A673 (cell line): ENCODE measurements at regions of chr2 and their contacts with region 1.

Region 1: DNA sequence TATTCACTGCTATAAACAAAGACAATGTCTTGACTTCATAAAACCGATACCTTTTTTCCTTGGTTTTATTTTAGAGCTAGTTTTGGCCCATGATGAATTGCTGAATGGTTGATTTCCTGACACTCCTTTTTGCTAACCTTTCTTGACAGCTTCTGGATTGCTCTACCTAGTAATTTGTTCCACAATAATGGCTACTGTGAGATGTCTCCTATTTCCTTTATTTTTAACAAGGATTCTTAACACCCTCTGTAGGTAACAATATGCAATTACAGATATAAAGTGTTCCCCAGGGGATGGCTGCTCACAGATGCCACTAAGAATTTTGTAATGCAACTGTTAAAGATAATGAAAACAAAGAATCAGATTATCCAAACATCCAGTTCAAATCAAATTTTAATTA is 100.8 kb upstream of the ATP5MC3 start:
- DNase-seq: peak; percentile 71
- H3K4me3 ChIP-seq: no peak overlapping the region
- H3K27ac ChIP-seq: no peak overlapping the region
- H3K4me1 ChIP-seq: no peaks in the 10 kb centered on the region
- H3K27me3 ChIP-seq: peaks cover 9% of the 10 kb centered on the region
- CTCF ChIP-seq: peak; percentile 61

Region 2: DNA sequence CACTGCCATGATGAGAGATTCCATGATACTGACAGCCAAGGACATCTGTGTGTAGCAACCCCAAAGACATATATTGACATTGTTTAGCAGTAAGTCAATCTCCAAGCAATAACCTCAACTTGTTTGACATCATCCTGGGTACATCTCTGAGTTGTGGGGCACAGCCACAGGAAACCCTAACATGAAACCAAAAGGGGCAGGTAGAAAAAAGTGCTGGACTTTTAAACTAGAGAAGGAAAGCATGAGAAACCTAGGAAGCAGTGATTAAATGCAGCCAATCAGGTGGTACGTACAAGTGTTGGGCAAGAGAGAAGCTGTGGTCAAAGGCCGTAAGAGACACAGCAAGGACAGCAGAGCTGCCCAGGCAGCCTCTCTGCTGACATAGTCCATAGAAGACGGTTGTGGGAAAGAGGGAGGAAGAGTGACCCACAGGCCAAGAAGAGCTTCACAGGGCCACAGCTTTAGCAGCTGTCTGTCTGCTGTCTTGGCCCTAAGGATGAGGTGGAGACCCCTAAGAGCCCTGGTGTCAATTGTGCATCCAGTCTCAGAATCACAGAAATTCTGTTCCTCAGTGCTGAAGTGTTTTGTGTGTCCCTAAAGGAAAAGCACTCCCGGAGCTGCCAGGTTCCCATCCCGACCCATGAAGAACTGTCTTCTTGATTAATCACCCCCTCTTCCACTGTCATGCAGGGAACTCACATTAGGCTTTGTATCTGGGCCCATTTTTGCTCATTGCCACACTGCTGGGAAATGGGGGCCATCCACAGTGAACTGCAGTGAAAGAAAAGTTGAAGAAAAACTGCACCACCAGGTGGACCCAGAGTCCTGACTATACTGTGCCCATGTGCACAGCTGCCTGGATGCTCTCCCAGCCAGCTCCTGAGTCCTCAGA is 251.7 kb before region 1 on chr2:
- CTCF ChIA-PET with region 1: no interaction called
- POLR2A ChIA-PET with region 1: no interaction called
- intact Hi-C with region 1: loop called (anchors 10 kb)
- DNase-seq: peak; percentile 57
- H3K4me3 ChIP-seq: no peak overlapping the region
- H3K27ac ChIP-seq: no peak overlapping the region
- H3K4me1 ChIP-seq: no peaks in the 10 kb centered on the region
- H3K27me3 ChIP-seq: no peaks in the 10 kb centered on the region
- CTCF ChIP-seq: peak; percentile 57

Region 3: GRCh38 chr2:175203621-175204496 is 78.4 kb before region 1 on chr2:
- CTCF ChIA-PET with region 1: interaction called, 3 read pairs
- POLR2A ChIA-PET with region 1: no interaction called
- intact Hi-C with region 1: loop called (anchors 5 kb)
- DNase-seq: peak; percentile 78
- H3K4me3 ChIP-seq: no peak overlapping the region
- H3K27ac ChIP-seq: no peak overlapping the region
- H3K4me1 ChIP-seq: no peaks in the 10 kb centered on the region
- H3K27me3 ChIP-seq: peaks cover 15% of the 10 kb centered on the region
- CTCF ChIP-seq: peak; percentile 78

Region 4: GRCh38 chr2:175318542-175318941 is 36.3 kb after region 1 on chr2:
- CTCF ChIA-PET with region 1: no interaction called
- POLR2A ChIA-PET with region 1: no interaction called
- intact Hi-C with region 1: no loop called
- DNase-seq: no peak
- H3K4me3 ChIP-seq: no peak overlapping the region
- H3K27ac ChIP-seq: no peak overlapping the region
- H3K4me1 ChIP-seq: no peaks in the 10 kb centered on the region
- H3K27me3 ChIP-seq: no peaks in the 10 kb centered on the region
- CTCF ChIP-seq: no peak

Region 5: GRCh38 chr2:175518206-175518605 is 235.9 kb after region 1 on chr2:
- CTCF ChIA-PET with region 1: no interaction called
- POLR2A ChIA-PET with region 1: no interaction called
- intact Hi-C with region 1: no loop called
- DNase-seq: no peak
- H3K4me3 ChIP-seq: no peak overlapping the region
- H3K27ac ChIP-seq: no peak overlapping the region
- H3K4me1 ChIP-seq: no peaks in the 10 kb centered on the region
- H3K27me3 ChIP-seq: no peaks in the 10 kb centered on the region
- CTCF ChIP-seq: no peak